AG04449 (cell line): ENCODE measurements at regions of chr1 and their contacts with region 1.

Region 1: DNA sequence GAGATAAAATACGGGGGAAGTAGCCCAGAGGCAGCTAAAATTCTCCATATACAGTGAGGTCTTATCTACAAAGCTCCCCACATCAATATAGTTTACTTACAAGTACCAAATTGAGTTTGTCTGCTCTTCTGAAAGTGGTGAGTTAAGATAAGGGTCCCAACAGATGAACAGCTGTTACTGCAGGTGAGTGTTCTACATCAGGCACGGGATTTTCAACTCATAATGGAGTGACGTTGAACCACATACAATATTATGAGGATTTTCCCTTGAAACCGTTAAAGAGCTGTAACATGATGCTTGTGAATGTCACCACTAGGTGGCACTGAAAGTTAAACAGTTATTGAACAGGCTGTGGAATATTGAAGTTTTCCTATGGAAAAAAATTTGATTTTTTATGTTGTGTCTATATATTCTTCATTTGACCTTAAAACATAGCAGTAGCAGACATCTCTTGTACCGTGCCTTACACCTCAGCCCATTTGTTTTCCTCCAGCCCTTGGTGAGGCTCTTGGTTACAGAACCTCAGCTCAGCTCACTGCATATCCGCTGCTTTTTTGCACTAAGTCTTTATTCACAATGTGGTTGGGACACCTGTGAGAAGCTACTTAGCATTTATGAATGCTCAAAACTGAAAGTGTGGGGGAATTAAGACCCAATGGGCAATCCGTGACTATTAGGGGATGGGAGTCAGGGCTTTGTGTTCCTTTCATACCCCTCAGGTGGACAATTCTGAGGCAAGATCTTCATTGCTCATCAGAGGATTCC is 23.2 kb downstream of the CD1D start:
- DNase-seq: peak; percentile 14
- H3K4me3 ChIP-seq: no peak overlapping the region
- CTCF ChIP-seq: peak; percentile 54

Region 2: DNA sequence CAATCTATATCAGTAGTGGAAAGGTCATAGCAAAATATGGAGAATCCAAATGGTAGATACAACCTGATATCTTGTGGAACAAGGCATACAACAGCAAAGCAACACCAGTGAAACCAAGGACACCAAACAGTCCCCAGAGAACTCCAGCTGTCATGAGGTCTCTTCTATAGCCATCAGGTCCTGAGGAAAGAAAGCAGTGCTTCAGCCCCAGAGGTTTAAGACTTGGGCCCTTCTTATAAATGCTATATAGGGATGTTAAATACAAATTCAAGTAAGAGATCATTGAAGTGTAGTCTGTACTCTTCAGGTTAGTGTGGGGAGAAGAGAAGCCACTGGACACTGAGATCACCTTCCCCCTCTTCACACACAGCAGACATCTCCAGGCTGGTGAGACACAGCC is 437.1 kb before region 1 on chr1:
- CTCF ChIA-PET with region 1: no interaction called
- POLR2A ChIA-PET with region 1: no interaction called
- DNase-seq: no peak
- H3K4me3 ChIP-seq: no peak overlapping the region
- CTCF ChIP-seq: no peak

Region 3: DNA sequence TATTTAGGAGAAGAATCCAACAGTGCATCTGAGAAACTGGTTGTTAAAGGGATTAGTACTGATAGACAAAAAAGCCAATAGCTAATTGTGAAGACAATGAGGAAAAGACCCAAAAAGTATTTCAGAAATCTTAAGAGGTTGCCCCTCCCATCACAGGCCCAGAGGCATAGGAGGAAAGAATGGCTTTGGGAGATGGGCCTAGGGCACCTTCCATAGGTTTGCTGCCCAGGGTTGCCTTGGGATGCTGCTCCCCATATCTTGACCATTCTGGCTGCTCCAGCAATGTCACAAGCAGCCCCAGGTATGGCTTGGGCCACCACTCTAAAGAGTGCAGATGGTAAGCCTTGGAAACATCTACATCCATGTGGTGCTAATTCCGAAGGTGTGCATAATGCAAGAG is 293.6 kb before region 1 on chr1:
- CTCF ChIA-PET with region 1: no interaction called
- POLR2A ChIA-PET with region 1: no interaction called
- DNase-seq: no peak
- H3K4me3 ChIP-seq: no peak overlapping the region
- CTCF ChIP-seq: no peak

Region 4: DNA sequence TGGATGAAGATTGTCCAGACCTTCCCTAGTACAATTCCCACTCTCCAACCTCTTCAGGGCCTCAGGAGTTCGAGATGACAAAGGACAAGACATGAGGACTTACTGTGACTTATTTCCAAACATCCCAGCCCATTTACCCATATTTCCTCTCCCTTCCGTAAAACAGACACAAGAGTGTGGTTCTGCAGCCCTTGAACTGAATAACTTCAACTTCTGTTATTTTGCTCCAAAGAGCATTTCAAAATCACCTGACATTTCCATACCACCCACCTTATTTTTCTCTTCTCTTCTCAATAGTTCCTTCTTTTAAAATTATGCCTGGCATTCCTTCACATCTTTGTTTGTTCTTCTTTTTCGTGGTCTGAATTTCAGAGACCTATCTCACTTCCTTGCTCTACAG is 230.9 kb after region 1 on chr1:
- CTCF ChIA-PET with region 1: no interaction called
- POLR2A ChIA-PET with region 1: no interaction called
- DNase-seq: no peak
- H3K4me3 ChIP-seq: no peak overlapping the region
- CTCF ChIP-seq: no peak

Region 5: DNA sequence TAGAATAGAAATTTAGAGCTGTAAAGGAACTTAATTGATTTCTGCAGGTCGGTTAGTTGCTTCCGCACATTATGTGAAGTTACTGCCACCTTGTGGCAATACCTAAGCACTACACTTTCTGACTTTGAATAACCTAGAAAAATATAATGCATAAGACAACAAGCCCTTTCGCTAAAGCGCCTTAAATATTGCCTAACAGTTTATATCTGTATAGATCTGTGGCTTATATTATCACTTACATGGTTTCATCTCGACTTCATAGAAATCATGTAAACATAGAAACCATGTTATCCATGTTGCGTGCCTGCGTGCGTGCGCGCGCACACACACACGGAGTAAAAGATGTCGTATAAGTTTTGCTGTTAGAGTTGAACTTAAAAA is 794.9 kb after region 1 on chr1:
- CTCF ChIA-PET with region 1: interaction called, 58 read pairs
- POLR2A ChIA-PET with region 1: no interaction called
- DNase-seq: no peak
- H3K4me3 ChIP-seq: peak overlapping the region; percentile 69
- CTCF ChIP-seq: peak; percentile 51

Region 6: GRCh38 chr1:159077120-159077961 is 873.5 kb after region 1 on chr1:
- CTCF ChIA-PET with region 1: interaction called, 80 read pairs
- POLR2A ChIA-PET with region 1: no interaction called
- DNase-seq: no peak
- H3K4me3 ChIP-seq: no peak overlapping the region
- CTCF ChIP-seq: no peak